ENCODE measurements at regions of chr19 and their contacts with region 1.

Region 1: DNA sequence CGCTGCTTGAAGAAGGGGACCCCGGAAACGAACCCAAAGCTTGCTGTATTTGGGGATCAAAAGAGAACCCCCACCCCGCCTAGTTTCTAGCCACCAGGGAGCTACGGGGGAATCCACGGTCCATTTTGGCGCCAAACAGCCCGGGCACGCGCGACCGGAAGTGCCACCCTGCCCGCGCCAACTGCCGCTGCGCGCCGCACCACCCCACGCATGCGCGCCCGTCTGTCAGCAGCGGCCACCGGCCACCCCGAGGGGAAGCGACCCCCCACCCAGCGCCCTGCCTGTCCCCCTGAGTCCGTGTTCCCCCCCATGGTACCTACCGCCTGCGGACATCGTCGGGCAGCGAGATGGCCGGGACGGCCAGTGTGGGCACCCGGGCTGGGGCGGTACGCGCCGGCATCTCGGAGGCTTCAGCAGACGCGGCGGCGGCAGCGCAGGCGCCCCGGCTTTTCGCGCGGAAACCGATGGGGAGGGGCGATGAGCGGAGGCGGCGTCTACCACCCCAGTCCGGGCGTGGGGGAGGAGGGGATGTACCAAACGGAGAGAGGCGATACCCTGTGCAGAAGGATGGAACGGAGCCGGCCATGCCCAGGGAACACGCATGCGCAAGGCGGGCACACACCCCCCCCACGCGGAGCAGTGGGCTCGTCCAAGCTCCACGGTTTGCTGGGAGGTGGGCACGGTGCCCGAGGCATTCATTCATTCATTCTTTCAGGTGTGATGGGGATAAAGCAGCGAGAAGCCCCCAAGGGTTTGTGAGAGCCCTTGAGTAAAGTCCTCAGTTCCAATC is at the start of gene DNMT1:
- DNase-seq: peak; percentile 92
- H3K4me3 ChIP-seq: peak within 1 kb of the TSS; percentile 85
- H3K27ac ChIP-seq: peak within 1 kb of the TSS; percentile 73
- H3K27me3 ChIP-seq: no peaks in the 10 kb centered on the region
- CTCF ChIP-seq: no peak
- polyA plus RNA-seq, gene DNMT1: 54.5 and 60.7 TPM in 2 replicates

Region 2: DNA sequence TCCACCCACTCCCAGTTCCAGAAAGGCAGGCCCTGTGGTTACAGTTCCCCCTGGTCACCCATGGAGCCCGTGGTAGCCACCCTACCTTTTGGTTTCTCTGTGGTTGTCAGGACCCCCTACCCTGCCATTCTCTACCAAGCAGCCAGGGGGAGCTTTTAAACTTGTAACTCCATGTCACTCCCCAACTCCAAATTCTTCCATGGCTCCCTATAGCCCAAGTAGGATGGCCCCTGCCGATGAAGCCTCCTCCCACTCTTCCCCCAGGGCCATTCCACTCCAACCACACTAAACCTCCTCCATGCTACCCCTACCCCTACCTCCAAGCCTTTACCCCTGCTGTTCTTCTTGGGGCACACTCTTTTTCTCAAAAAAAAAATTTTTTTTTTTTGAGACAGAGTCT is 34.2 kb after region 1 on chr19:
- CTCF ChIA-PET with region 1: interaction called, 3 read pairs
- POLR2A ChIA-PET with region 1: interaction called, 11 read pairs
- DNase-seq: no peak
- H3K4me3 ChIP-seq: peak overlapping the region; percentile 41
- H3K27ac ChIP-seq: no peak overlapping the region
- H3K27me3 ChIP-seq: no peaks in the 10 kb centered on the region
- CTCF ChIP-seq: peak; percentile 51

Region 3: DNA sequence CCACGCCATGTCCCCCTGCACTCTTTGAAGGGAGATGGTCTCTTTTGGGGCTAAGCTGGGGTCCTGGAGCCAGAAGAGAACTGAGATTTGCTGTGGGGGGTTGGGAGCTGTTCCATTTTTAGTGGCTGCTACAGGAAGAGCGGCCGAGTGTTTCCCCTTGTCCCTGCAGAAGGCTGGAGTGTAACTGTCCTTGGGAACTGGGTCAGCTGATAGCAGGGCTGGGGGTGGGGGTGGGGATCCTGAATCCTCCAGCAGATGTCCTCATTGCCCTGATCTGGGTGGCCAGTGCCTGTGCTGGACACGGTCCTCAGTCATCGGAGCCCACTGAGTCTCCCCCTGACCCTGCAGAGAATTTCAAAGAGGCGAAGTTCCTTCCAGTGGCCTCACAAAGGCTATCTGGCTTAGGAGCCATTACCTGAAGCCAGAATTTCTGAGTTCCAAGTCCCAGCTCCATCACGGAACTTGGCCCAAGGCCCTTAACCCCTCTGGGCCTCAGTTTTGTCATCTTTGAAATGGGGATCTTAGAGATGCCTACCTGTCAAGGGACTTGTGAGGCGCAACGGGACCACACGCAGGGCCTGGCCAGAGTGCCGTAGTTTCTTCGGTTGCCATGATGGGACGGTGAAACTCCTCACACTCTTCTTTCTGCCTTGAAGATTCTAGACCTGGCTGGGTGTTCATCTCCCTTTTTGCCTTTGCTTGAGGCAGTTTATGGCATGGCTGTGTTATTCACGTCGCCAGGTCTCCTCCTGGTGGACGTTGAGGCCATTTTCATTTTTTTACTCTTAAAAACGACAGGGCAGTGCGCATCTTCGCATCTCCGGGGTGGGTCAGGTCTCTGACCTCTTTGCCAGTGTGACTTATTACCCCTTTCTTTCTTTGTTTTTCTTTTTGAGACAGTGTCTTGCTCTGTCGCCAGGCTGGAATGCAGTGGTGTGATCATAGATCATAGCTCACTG is 575.1 kb after region 1 on chr19:
- CTCF ChIA-PET with region 1: no interaction called
- POLR2A ChIA-PET with region 1: no interaction called
- DNase-seq: no peak
- H3K4me3 ChIP-seq: no peak overlapping the region
- H3K27ac ChIP-seq: no peak overlapping the region
- H3K27me3 ChIP-seq: no peaks in the 10 kb centered on the region
- CTCF ChIP-seq: peak; percentile 33

Measured in AG04450 (cell line).